PC-9 (cell line): ENCODE measurements at regions of chr1 and their contacts with region 1.

Region 1: DNA sequence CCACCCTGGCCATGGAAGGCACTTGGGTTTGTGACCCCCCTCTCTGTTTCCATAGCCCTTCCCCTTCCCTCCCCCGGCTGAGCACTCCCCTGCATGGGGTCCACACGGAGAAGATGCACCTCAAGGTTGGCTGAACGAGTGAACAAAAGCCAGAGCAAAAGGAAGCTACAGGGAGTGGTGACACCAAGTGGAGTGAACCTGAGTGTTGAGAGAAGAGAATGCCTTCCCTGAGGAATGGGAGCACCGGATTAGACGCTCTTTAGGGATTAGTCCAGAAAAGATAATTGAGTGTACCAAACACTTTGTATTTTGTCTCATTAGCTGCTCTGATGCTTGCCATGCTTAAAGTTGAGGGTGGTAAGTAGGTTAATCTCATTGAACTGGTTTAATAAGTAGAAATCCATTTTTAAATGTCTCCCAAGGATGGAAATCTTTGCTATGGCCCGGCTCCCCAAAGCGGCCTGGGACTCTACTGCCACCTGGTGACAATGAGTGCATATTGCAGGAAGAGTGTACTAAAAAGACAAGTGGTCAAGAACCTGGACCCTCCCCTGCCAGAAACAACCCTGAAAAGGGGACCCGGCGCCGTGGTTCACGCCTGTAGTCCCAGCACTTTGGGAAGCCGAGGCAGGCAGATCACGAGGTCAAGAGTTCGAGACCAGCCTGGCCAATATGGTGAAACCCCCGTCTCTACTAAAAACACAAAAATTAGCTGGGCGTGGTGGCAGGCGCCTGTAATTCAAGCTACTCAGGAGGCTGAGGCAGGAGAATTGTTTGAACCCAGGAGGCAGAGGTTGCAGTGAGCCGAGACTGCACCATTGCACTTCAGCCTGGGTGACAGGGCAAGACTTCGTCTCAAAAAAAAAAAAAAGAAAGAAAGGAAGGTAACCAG is 150.6 kb upstream of the ZC3H12A start:
- DNase-seq: peak in 1 of 2 experiments; percentile 6
- H3K4me3 ChIP-seq: no peak overlapping the region
- H3K27ac ChIP-seq: no peak overlapping the region
- H3K4me1 ChIP-seq: no peaks in the 10 kb centered on the region
- H3K27me3 ChIP-seq: peaks cover 42% of the 10 kb centered on the region
- CTCF ChIP-seq: peak; percentile 82

Region 2: GRCh38 chr1:36516372-36517325 is 807.1 kb before region 1 on chr1:
- CTCF ChIA-PET with region 1: interaction called, 3 read pairs
- POLR2A ChIA-PET with region 1: no interaction called
- intact Hi-C with region 1: loop called (anchors 5 kb)
- DNase-seq: peak in 1 of 2 experiments; percentile 44
- H3K4me3 ChIP-seq: no peak overlapping the region
- H3K27ac ChIP-seq: no peak overlapping the region
- H3K4me1 ChIP-seq: no peaks in the 10 kb centered on the region
- H3K27me3 ChIP-seq: no peaks in the 10 kb centered on the region
- CTCF ChIP-seq: peak; percentile 96

Region 3: GRCh38 chr1:37255136-37255795 is 68.5 kb before region 1 on chr1:
- CTCF ChIA-PET with region 1: no interaction called
- POLR2A ChIA-PET with region 1: no interaction called
- intact Hi-C with region 1: no loop called
- DNase-seq: peak in 1 of 2 experiments; percentile 9
- H3K4me3 ChIP-seq: no peak overlapping the region
- H3K27ac ChIP-seq: no peak overlapping the region
- H3K4me1 ChIP-seq: no peaks in the 10 kb centered on the region
- H3K27me3 ChIP-seq: peaks cover 67% of the 10 kb centered on the region
- CTCF ChIP-seq: no peak

Region 4: DNA sequence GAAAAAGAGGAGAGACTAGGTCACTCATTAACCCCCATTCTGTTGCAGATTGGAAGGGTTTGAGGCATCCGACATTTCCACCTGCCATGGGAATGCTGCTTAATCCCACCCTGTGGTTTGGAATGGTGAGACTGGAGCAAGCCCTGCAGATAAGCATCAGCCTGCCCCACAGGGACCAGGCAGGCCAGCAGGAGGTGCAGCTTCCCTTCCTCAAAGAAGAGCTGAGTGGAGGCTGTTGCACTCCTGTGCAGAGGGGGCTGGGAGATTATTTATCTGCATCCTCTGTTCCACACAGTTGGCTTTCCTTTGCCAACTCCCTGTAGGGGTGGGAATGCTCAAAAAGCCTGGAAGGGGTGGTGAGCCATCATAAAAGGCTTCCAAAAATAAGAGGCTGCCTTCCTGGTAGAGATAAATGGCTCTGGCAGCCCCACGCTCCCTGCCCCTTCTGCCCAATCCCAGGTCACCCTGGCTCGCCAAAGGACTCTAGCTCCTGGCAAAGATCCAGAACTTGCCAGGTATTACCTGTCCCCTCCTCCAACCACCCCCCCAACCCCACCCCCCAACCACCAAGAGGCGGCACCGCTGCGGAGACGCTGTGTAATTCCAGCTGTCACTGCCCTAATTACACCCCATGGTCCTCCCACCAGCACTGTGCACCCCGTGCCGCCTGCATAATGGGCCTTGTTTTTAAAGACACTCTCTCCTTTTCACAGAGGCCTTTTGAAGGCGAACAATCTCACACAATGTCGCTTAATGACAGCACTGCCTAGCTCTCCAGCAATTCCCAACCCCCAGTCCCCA is 67.7 kb after region 1 on chr1:
- CTCF ChIA-PET with region 1: no interaction called
- POLR2A ChIA-PET with region 1: no interaction called
- intact Hi-C with region 1: no loop called
- DNase-seq: no peak
- H3K4me3 ChIP-seq: no peak overlapping the region
- H3K27ac ChIP-seq: no peak overlapping the region
- H3K4me1 ChIP-seq: no peaks in the 10 kb centered on the region
- H3K27me3 ChIP-seq: peaks cover 96% of the 10 kb centered on the region
- CTCF ChIP-seq: no peak

Region 5: GRCh38 chr1:37595440-37596319 is 271.9 kb after region 1 on chr1 and contains the start of gene GNL2:
- CTCF ChIA-PET with region 1: no interaction called
- POLR2A ChIA-PET with region 1: no interaction called
- intact Hi-C with region 1: no loop called
- DNase-seq: peak; percentile 85 to 98
- H3K4me3 ChIP-seq: peak within 1 kb of the TSS; percentile 85
- H3K27ac ChIP-seq: peak within 1 kb of the TSS; percentile 3; the same call in 1 of the 2 replicates
- H3K4me1 ChIP-seq: peaks cover 14% of the 10 kb centered on the region
- H3K27me3 ChIP-seq: no peaks in the 10 kb centered on the region
- CTCF ChIP-seq: no peak
- total RNA-seq, gene GNL2: 51.3 and 51.9 TPM in 2 replicates